ENCODE measurements at regions of chr10 and their contacts with region 1.

Region 1: GRCh38 chr10:42552493-42553407 is 85.6 kb downstream of the ZNF33B start:
- DNase-seq: peak; percentile 99
- ATAC-seq: peak; percentile 89
- H3K4me3 ChIP-seq: peak overlapping the region; percentile 87
- H3K27ac ChIP-seq: no peak overlapping the region
- H3K4me1 ChIP-seq: peaks cover 14% of the 10 kb centered on the region
- H3K27me3 ChIP-seq: no peaks in the 10 kb centered on the region
- CTCF ChIP-seq: no peak

Region 2: DNA sequence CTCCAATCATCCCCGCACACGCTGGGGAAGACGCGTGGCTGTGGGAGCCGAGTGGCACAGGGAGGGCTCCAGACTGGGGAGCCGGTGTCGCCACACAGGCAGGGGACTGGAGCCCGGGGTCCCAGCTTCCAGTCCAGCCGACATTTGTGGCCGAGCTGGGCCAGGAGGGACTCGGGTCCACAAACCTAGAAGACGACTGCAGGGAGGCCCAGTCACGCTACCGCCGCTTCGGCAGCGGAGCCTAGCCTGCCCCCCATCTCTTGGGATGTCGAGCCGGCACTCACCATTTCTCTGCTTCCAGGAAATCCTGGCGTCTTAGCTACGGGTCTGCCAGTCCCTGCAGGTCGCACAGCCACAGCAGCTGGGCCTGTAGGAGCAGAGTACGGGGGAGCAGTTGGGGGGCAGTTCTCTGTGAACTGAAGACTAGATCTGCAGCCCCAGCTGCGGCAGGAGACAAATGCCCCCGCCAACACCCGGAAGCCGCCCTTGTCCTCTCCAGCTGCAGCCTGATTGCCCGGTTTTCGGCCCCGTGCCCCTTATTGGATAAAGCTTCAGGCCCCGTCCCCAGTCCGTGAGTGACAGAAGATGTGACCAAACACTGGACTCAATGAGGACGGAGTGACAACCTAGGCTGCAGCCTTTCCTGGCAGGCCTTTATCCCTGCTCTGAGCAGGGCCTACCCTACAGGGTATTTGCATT is 185.1 kb before region 1 on chr10:
- CTCF ChIA-PET with region 1: no interaction called
- POLR2A ChIA-PET with region 1: no interaction called
- intact Hi-C with region 1: loop called (anchors 2 kb)
- DNase-seq: peak; percentile 98
- ATAC-seq: peak; percentile 100
- H3K4me3 ChIP-seq: peak overlapping the region; percentile 84
- H3K27ac ChIP-seq: no peak overlapping the region
- H3K4me1 ChIP-seq: no peaks in the 10 kb centered on the region
- H3K27me3 ChIP-seq: no peaks in the 10 kb centered on the region
- CTCF ChIP-seq: no peak

Region 3: GRCh38 chr10:42475168-42476098 is 77.3 kb before region 1 on chr10:
- CTCF ChIA-PET with region 1: no interaction called
- POLR2A ChIA-PET with region 1: no interaction called
- intact Hi-C with region 1: loop called (anchors 5 kb)
- DNase-seq: peak; percentile 78
- ATAC-seq: peak; percentile 86
- H3K4me3 ChIP-seq: peak overlapping the region; percentile 87
- H3K27ac ChIP-seq: no peak overlapping the region; the same call in 1 of the 2 replicates
- H3K4me1 ChIP-seq: no peaks in the 10 kb centered on the region
- H3K27me3 ChIP-seq: no peaks in the 10 kb centered on the region
- CTCF ChIP-seq: no peak; the same call in 1 of the 2 replicates

Region 4: GRCh38 chr10:42638055-42638820 is 85.5 kb after region 1 on chr10 and contains the start of gene ZNF33B:
- CTCF ChIA-PET with region 1: no interaction called
- POLR2A ChIA-PET with region 1: no interaction called
- intact Hi-C with region 1: loop called (anchors 1 kb)
- DNase-seq: peak; percentile 99
- ATAC-seq: peak; percentile 97
- H3K4me3 ChIP-seq: peak within 1 kb of the TSS; percentile 76
- H3K27ac ChIP-seq: peak within 1 kb of the TSS; percentile 92
- H3K4me1 ChIP-seq: peaks cover 15% of the 10 kb centered on the region
- H3K27me3 ChIP-seq: no peaks in the 10 kb centered on the region
- CTCF ChIP-seq: no peak
- total RNA-seq, gene ZNF33B: 6.2 and 11.7 TPM in 2 replicates

Region 5: DNA sequence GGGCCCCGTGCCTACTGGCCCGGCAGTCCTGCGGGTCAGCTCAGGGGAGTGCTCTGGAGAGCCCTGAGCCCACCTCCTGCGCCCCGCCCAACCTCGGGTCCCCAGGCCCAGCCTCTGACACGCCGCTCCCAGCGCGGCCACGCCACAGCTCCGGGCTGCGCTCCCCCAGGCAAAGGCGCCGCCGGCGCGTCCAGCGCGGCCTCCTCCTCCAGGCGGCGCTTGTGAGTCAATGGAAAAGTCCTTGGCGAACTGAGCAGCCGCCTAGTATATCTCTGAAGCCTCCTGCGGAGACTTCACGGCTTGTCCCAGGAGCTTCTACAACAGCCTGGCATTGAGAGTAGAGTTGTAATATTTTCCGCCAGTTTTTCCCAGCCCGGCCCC is 200.4 kb after region 1 on chr10:
- CTCF ChIA-PET with region 1: no interaction called
- POLR2A ChIA-PET with region 1: no interaction called
- intact Hi-C with region 1: loop called (anchors 10 kb)
- DNase-seq: peak; percentile 89
- ATAC-seq: peak; percentile 90
- H3K4me3 ChIP-seq: peak overlapping the region; percentile 66
- H3K27ac ChIP-seq: no peak overlapping the region
- H3K4me1 ChIP-seq: peaks cover 12% of the 10 kb centered on the region
- H3K27me3 ChIP-seq: peaks cover 51% of the 10 kb centered on the region
- CTCF ChIP-seq: peak; percentile 89

Region 6: GRCh38 chr10:42782446-42783180 is 229.9 kb after region 1 on chr10 and contains the start of gene BMS1:
- CTCF ChIA-PET with region 1: no interaction called
- POLR2A ChIA-PET with region 1: no interaction called
- intact Hi-C with region 1: loop called (anchors 10 kb)
- DNase-seq: peak; percentile 96
- ATAC-seq: peak; percentile 90
- H3K4me3 ChIP-seq: peak within 1 kb of the TSS; percentile 79
- H3K27ac ChIP-seq: peak within 1 kb of the TSS; percentile 65
- H3K4me1 ChIP-seq: peaks cover 14% of the 10 kb centered on the region
- H3K27me3 ChIP-seq: no peaks in the 10 kb centered on the region
- CTCF ChIP-seq: no peak
- total RNA-seq, gene BMS1: 36.6 and 41.9 TPM in 2 replicates